Psoas muscle (tissue), 8 donors: ENCODE measurements at regions of chr1 and their contacts with region 1.

Region 1: GRCh38 chr1:60969971-60970509 is 112.3 kb upstream of the NFIA start:
- DNase-seq: no peak
- ATAC-seq: peak; percentile 49 to 85 (median 67)
- H3K4me3 ChIP-seq: no peak overlapping the region
- H3K27ac ChIP-seq: no peak overlapping the region
- H3K4me1 ChIP-seq: no peaks in the 10 kb centered on the region
- H3K27me3 ChIP-seq: no peaks in the 10 kb centered on the region
- CTCF ChIP-seq: peak; percentile 56

Region 2: GRCh38 chr1:61210435-61211154 is 240.6 kb after region 1 on chr1:
- intact Hi-C with region 1: no loop called
- DNase-seq: no peak
- ATAC-seq: peak in 2 of 4 donors; percentile 42 to 60
- H3K4me3 ChIP-seq: no peak overlapping the region
- H3K27ac ChIP-seq: no peak overlapping the region
- H3K4me1 ChIP-seq: peaks cover 39% of the 10 kb centered on the region
- H3K27me3 ChIP-seq: no peaks in the 10 kb centered on the region
- CTCF ChIP-seq: peak; percentile 14

Region 3: GRCh38 chr1:61588736-61589672 is 619.0 kb after region 1 on chr1:
- intact Hi-C with region 1: loop called in 1 of 2 experiments (anchors 5 kb)
- DNase-seq: peak; percentile 28 to 61
- ATAC-seq: peak; percentile 61 to 89 (median 80)
- H3K4me3 ChIP-seq: no peak overlapping the region
- H3K27ac ChIP-seq: no peak overlapping the region
- H3K4me1 ChIP-seq: no peaks in the 10 kb centered on the region
- H3K27me3 ChIP-seq: no peaks in the 10 kb centered on the region
- CTCF ChIP-seq: peak; percentile 70

Region 4: GRCh38 chr1:61641578-61642336 is 671.7 kb after region 1 on chr1:
- intact Hi-C with region 1: loop called in 1 of 2 experiments (anchors 5 kb)
- DNase-seq: peak; percentile 73 to 88
- ATAC-seq: peak; percentile 78 to 92 (median 88)
- H3K4me3 ChIP-seq: peak overlapping the region; percentile 45
- H3K27ac ChIP-seq: no peak overlapping the region
- H3K4me1 ChIP-seq: no peaks in the 10 kb centered on the region
- H3K27me3 ChIP-seq: no peaks in the 10 kb centered on the region
- CTCF ChIP-seq: peak; percentile 74